RWPE1 (cell line): ENCODE measurements at regions of chr1 and their contacts with region 1.

Region 1: DNA sequence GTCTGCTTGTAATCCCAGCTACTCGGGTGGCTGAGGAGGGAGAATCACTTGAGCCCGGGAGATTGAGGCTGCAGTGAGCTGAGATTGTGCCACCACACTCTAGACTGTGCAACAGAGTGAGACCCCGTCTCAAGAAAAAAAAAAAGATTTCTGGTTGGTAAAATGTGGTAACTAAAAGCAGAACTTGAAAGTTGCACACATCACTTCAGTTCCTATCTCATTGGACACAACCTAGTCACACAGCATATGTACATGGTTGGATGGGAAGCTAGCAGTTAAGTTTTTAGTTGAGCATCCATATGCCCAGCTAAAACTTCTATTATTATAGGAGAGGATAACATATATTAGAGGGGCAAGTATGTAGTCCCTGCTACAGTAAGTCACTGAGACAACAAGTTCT is 22.1 kb downstream of the BCAS2 start:
- DNase-seq: no peak
- H3K27ac ChIP-seq: no peak overlapping the region
- CTCF ChIP-seq: no peak

Region 2: GRCh38 chr1:114346480-114347029 is 212.8 kb before region 1 on chr1:
- CTCF ChIA-PET with region 1: interaction called, 10 read pairs
- POLR2A ChIA-PET with region 1: no interaction called
- DNase-seq: peak; percentile 91
- H3K27ac ChIP-seq: peak overlapping the region; percentile 38
- CTCF ChIP-seq: peak; percentile 100

Region 3: GRCh38 chr1:114467488-114467887 is 91.9 kb before region 1 on chr1:
- CTCF ChIA-PET with region 1: no interaction called
- POLR2A ChIA-PET with region 1: no interaction called
- DNase-seq: no peak
- H3K27ac ChIP-seq: no peak overlapping the region
- CTCF ChIP-seq: no peak